Right lobe of liver (tissue), 6 donors: ENCODE measurements at regions of chr4 and their contacts with region 1.

Region 1: DNA sequence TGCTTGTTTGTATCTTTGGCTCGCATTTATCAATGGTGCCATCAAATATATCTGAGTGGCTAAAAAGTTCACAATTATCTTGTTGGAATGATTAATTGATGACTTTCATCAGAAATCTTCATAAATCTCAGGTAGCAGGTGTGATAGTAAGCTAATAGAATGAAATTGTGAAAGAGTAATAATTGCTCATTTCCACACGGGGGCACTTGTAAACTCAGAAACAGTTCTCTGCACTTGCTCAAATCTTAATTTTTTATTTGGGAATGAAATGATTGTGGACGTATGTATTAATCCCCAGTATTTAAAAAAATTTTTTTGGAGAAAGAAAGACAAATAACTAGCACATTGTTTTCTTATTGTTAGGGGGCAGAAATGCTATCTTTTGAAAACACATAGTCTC is 132.8 kb downstream of the DTHD1 start:
- DNase-seq: no peak
- ATAC-seq: peak in 1 of 4 donors; percentile 44
- H3K4me3 ChIP-seq: no peak overlapping the region
- H3K27ac ChIP-seq: no peak overlapping the region
- H3K4me1 ChIP-seq: no peaks in the 10 kb centered on the region
- H3K27me3 ChIP-seq: peaks cover 0 to 4% of the 10 kb centered on the region in 2 donors
- CTCF ChIP-seq: peak; percentile 30 to 44 (median 38)
- POLR2A ChIP-seq: no peak

Region 2: DNA sequence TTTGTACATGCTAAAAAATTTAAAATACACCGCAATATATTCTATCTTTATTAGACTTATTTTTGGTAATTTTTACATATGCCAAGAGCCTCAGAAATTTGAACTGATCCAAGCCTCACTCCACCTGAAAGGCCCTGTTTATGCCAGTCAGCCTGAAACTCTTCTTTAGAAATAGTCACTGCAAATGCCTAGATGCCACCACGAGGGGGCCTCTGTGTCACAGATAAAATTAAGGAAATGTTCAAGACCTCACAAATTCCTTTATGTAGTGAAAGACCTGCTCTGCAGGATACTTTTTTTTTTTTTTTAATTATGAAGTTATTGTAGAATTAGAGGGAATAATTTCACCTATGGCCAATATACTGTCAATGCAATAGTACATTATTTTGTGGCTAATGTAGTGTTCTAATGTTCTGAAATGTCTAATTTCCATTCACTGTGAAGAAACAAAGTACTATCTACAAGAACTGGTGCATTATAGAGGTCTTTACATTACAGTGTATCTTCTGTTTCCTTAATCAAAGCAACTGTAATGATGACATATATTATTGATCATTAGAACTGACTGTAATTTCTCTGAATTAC is 63.1 kb before region 1 on chr4:
- intact Hi-C with region 1: no loop called
- DNase-seq: peak; percentile 55 to 59 (median 59)
- ATAC-seq: peak; percentile 78 to 82 (median 80)
- H3K4me3 ChIP-seq: no peak overlapping the region
- H3K27ac ChIP-seq: no peak overlapping the region
- H3K4me1 ChIP-seq: peaks cover 0 to 16% (median 5%) of the 10 kb centered on the region in 4 donors
- H3K27me3 ChIP-seq: no peaks in the 10 kb centered on the region
- CTCF ChIP-seq: peak; percentile 70 to 88 (median 80)
- POLR2A ChIP-seq: no peak

Region 3: GRCh38 chr4:37389967-37390580 is 975.8 kb after region 1 on chr4:
- intact Hi-C with region 1: loop called in 1 of 2 experiments (anchors 5 kb)
- DNase-seq: no peak
- ATAC-seq: peak; percentile 75 to 87 (median 82)
- H3K4me3 ChIP-seq: peak overlapping the region in 1 of 3 donors; percentile 26
- H3K27ac ChIP-seq: no peak overlapping the region
- H3K4me1 ChIP-seq: peaks cover 0 to 6% (median 0%) of the 10 kb centered on the region in 4 donors
- H3K27me3 ChIP-seq: no peaks in the 10 kb centered on the region
- CTCF ChIP-seq: peak; percentile 72 to 86 (median 82)
- POLR2A ChIP-seq: no peak